ENCODE measurements at regions of chr1 and their contacts with region 1.

Region 1: DNA sequence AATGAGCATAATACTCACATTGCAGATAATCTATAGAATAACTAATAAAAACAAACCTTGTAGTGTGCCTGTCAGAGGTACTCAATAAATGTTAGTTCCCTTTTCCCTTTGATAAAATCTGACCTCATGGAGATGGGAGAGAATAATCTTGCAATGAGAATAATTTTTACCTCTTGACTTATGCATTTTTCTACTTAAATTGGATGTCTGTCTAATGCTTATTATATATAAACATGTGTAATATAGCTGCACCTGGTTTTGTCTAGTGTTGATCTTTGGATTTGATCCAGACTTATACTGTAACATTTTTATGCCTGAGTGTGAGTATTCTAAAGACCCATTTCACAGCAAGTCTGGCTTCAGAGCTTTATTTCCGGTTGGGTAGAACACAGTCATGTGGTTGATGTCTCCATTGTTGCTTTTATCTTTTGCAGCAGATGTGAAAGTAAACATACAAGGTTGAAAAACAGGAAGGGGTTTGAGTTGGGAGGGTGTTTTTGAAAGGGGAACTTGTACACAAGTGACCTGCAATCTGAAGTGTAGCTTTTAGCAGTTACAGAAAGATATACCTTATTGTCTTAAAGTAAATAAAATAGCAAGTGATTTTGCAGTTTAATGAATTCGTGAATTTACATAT is 12.4 kb downstream of the EPB41 start:
- DNase-seq: peak; percentile 93
- H3K4me3 ChIP-seq: peak overlapping the region in 1 of 3 experiments; percentile 52
- H3K27ac ChIP-seq: peak overlapping the region; percentile 68
- H3K4me1 ChIP-seq: peaks cover 28% of the 10 kb centered on the region
- H3K27me3 ChIP-seq: no peaks in the 10 kb centered on the region
- CTCF ChIP-seq: no peak
- POLR2A ChIP-seq: peak; percentile 28

Region 2: GRCh38 chr1:28902738-28903137 is 24.0 kb before region 1 on chr1:
- CTCF ChIA-PET with region 1: no interaction called
- POLR2A ChIA-PET with region 1: no interaction called
- dilution Hi-C with region 1: no loop called
- intact Hi-C with region 1: no loop called
- DNase-seq: no peak
- H3K4me3 ChIP-seq: no peak overlapping the region
- H3K27ac ChIP-seq: no peak overlapping the region
- H3K4me1 ChIP-seq: peaks cover 10% of the 10 kb centered on the region
- H3K27me3 ChIP-seq: no peaks in the 10 kb centered on the region
- CTCF ChIP-seq: no peak
- POLR2A ChIP-seq: no peak

Region 3: DNA sequence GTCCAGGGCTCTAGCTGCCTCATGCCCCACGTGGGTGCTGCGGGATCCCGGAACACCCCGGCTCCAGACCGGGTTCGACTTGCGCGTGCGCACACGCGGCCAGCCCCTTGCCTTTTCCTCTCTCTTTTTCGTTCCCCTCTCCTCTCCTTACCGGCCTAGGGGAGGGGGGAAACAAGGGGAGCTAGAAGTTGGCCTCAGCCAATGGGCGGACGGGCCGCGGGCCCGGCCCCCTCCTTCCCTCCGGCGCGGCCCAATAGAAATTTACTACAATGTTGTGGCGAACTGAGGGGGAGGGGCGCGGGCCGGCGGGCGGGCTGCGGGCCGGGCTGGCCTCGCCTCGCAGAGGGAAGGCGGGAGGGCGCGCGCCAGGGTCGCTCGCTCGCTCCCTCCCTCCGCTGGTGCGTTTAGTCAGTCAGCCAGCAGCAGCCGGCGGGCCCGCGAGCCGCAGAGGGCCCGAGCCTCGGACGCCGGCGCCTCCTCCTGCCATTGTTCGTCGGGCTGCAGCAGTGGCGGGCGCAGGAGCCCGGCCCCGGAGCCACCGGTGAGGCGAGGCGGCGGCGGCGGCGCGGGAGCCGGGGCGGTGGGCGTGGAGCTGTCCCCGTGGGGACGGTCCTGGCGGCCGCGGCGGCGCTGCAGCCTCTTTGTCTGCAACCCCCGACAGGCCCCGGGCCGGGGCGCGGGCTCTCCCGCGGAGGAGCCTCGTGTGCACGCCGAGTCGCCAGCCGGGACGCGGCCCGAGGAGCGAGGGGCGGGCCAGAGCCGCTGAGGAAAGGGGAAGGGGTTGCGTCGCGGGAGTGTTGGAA is 12.3 kb before region 1 on chr1 and contains the start of gene EPB41:
- CTCF ChIA-PET with region 1: interaction called, 5 read pairs
- POLR2A ChIA-PET with region 1: interaction called, 3 read pairs
- dilution Hi-C with region 1: no loop called
- intact Hi-C with region 1: loop called (anchors 1 kb)
- DNase-seq: peak; percentile 95
- H3K4me3 ChIP-seq: peak within 1 kb of the TSS; percentile 39 to 54 (median 52)
- H3K27ac ChIP-seq: peak within 1 kb of the TSS; percentile 9
- H3K4me1 ChIP-seq: peaks cover 10% of the 10 kb centered on the region
- H3K27me3 ChIP-seq: no peaks in the 10 kb centered on the region
- CTCF ChIP-seq: no peak
- POLR2A ChIP-seq: no peak
- total RNA-seq, gene EPB41: 39.7 and 45.7 TPM in 2 replicates

Region 4: GRCh38 chr1:28983509-28984310 is 57.0 kb after region 1 on chr1:
- CTCF ChIA-PET with region 1: no interaction called
- POLR2A ChIA-PET with region 1: no interaction called
- dilution Hi-C with region 1: no loop called
- intact Hi-C with region 1: loop called (anchors 10 kb)
- DNase-seq: no peak
- H3K4me3 ChIP-seq: no peak overlapping the region
- H3K27ac ChIP-seq: no peak overlapping the region
- H3K4me1 ChIP-seq: peaks cover 2% of the 10 kb centered on the region
- H3K27me3 ChIP-seq: no peaks in the 10 kb centered on the region
- CTCF ChIP-seq: no peak
- POLR2A ChIP-seq: no peak